ENCODE measurements at regions of chr10 and their contacts with region 1.

Region 1: DNA sequence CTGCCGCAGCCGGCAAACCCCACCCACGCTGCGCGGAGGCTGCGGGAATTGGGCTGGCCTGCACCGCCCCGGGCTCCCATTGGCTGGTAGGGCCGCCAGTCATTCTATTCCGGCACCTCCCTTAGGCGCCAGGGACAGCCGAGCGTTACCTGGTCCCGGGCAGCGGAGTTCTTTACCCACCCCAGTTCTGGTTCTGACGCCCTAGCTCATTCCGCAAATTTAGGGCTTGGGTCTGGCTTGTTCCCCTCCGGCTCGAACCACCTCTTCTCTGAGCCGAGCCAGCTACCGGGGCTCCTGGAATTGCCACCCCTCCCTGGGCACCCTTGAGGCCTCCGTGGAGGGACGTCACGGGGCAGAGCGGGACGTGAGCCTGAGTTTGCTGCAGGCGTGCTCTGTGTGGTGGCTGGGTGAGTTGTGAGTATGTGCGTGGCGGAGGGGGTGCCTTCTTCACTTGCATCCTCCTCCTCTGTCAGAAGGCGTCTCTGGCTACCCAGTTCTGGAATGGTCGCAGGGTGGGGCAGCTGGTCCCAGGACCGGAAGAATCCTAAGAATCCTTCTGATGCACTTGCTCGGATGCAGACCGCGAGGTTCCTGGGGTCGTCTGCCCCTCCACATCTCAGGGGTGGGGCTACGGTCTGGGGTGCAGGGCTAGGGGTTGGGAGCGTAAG is at the starts of genes PDZD7 and SFXN3:
- DNase-seq: peak; percentile 100

Region 2: GRCh38 chr10:100962351-100963080 is 68.7 kb before region 1 on chr10:
- CTCF ChIA-PET with region 1: no interaction called
- POLR2A ChIA-PET with region 1: no interaction called
- DNase-seq: no peak

Region 3: DNA sequence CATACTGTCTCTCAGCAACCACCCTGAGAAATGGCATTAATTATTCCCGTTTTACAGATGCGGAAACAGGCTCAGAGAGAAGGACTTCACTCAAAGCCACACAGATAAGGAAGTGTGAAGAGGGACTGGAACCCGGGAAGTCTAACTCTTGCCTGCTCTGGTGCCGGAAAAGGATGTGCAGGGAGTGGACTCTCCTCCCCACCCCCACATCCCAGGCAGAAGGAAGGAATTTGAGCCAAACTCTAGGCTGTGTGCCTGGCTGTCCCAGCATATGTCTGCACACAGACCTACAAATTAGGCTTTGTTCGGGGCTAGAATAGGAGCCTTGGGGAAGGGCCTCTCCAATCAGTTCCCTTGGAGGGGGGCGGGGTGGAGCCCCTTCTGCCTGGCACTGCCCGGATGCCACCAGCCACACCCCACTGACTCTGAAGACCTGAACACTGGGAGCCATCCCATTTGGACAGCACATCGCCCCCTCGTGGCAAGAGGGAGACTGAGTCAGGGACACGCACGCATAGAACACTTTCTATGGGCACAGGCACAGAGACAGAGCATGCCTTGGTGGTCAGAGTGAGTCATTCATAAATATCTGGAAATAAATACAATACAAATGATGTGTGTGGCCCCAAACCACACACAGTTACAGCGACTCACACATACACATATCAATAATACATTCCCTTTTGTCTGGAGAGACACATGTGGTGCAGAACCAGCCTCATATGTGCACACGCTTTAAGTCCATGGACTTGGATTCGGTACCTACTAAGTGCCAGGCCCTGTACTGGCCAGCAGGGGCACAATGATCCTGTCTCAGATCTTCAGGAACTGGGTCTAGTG is 18.5 kb before region 1 on chr10:
- CTCF ChIA-PET with region 1: interaction called, 35 read pairs
- POLR2A ChIA-PET with region 1: interaction called, 3 read pairs
- DNase-seq: peak; percentile 82

Region 4: DNA sequence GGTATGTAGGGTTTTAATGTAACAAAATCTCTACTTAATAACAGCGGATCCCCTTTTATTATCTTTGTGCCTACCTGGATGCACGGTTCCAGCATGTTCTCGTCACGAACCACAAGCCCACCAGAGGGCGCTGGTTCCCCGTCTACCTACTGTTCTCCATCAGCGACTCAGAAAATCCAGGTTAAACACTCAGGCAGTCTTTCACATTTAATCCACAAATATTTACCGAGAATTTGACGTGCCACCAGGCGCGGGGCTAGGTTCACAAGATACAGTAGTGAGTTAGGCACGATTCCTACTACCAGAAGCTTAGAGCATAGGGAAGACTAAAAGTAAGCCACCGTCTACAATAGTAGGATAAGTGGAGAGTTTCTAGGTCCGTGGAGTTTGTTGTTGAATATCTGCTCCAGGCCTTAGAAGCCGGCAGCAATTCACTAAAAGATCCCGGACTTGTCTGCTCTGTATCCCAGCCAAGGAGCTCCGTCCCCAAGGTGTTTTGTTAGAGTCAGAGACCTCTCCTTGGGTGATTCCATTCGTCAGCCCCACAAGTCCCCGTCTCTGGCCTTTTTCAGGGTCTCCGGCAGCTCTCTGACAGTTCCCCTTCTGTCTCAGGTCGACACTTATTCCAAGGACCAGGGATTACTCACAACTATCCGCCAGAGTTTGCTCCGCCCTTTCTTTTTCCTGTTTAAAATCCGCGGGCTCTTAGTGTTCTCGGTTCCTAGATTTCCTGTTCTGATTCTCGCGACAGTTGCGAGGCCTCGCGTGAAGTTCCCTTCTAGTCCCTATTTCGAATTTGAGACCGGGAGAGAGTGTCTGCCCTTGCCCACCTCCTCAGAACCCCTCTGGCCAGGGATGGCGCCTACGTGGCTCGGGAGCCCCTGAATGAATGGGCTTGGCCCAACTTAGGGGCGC is 29.0 kb after region 1 on chr10:
- CTCF ChIA-PET with region 1: interaction called, 3 read pairs
- POLR2A ChIA-PET with region 1: interaction called, 21 read pairs
- DNase-seq: peak; percentile 88

Region 5: GRCh38 chr10:101067356-101068083 is 36.3 kb after region 1 on chr10:
- CTCF ChIA-PET with region 1: interaction called, 3 read pairs
- POLR2A ChIA-PET with region 1: interaction called, 21 read pairs
- DNase-seq: peak; percentile 88

Region 6: DNA sequence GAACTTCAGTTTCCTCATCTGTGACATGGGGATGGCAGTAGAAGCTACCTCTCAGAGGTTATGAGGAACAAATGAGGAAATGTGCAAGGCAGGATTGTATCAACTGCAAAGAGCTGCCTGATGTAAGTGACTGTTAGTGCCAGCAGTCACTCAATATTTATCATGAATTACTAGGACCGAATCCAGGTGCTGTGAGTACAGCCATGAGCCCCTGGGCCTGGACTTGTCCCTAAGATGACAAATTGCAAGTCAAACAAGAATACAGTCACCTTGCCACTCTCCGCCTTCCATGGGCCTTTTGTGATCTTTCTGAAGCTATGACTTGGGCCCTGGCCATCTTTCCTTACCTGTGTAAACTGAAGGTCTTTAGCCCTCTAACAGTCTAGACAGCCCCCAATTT is 72.2 kb after region 1 on chr10:
- CTCF ChIA-PET with region 1: no interaction called
- POLR2A ChIA-PET with region 1: no interaction called
- DNase-seq: no peak